ENCODE measurements at regions of chr2 and their contacts with region 1.

Region 1: GRCh38 chr2:26982102-26982742 is 11.8 kb downstream of the MAPRE3 start:
- DNase-seq: peak in 6 of 14 experiments; percentile 6 to 52 (median 9)
- ATAC-seq: peak; percentile 80
- H3K4me3 ChIP-seq: no peak overlapping the region
- H3K4me3 Mint-ChIP-seq: no peak overlapping the region
- H3K27ac ChIP-seq: no peak overlapping the region
- H3K27ac Mint-ChIP-seq: no peak overlapping the region
- H3K4me1 ChIP-seq: no peaks in the 10 kb centered on the region
- H3K4me1 Mint-ChIP-seq: no peaks in the 10 kb centered on the region
- H3K27me3 ChIP-seq: no peaks in the 10 kb centered on the region
- H3K27me3 Mint-ChIP-seq: no peaks in the 10 kb centered on the region
- CTCF ChIP-seq: peak; percentile 20

Region 2: DNA sequence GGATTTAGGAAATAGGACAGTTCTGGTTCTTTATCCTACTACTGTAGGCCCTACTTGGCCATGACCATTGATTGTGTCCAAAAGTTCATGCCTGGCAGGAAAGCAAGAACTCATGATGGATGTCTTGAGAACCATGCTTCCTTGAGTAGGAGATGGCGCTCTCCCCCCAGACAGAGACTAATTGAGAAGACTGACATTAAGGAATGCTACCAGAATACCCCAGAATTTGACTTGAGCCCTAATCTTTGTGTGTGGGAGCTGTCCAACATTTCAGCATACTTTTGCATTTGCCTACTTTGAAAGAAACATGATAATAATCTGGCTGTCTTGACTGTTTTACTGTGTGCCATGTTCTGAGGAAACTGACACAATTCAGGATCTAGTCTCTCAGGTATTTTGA is 11.5 kb after region 1 on chr2:
- CTCF ChIA-PET with region 1: interaction called, 10 read pairs
- POLR2A ChIA-PET with region 1: no interaction called
- intact Hi-C with region 1: no loop called
- DNase-seq: no peak
- ATAC-seq: no peak
- H3K4me3 ChIP-seq: no peak overlapping the region
- H3K4me3 Mint-ChIP-seq: no peak overlapping the region
- H3K27ac ChIP-seq: no peak overlapping the region
- H3K27ac Mint-ChIP-seq: no peak overlapping the region
- H3K4me1 ChIP-seq: no peaks in the 10 kb centered on the region
- H3K4me1 Mint-ChIP-seq: no peaks in the 10 kb centered on the region
- H3K27me3 ChIP-seq: no peaks in the 10 kb centered on the region
- H3K27me3 Mint-ChIP-seq: peaks cover 9% of the 10 kb centered on the region
- CTCF ChIP-seq: no peak

Measured in CD4-positive, alpha-beta T cell (primary cell).